ENCODE measurements at regions of chr2 and their contacts with region 1.

Region 1: GRCh38 chr2:121530212-121530705 is 421 bp upstream of the RNU4ATAC start:
- DNase-seq: peak; percentile 71 to 85 (median 80)
- H3K4me3 ChIP-seq: peak overlapping the region; percentile 54 to 99 (median 86)
- H3K27ac ChIP-seq: peak overlapping the region; percentile 91 to 100 (median 99)
- H3K27me3 ChIP-seq: no peaks in the 10 kb centered on the region
- CTCF ChIP-seq: peak in 1 of 56 donors; percentile 12

Region 2: DNA sequence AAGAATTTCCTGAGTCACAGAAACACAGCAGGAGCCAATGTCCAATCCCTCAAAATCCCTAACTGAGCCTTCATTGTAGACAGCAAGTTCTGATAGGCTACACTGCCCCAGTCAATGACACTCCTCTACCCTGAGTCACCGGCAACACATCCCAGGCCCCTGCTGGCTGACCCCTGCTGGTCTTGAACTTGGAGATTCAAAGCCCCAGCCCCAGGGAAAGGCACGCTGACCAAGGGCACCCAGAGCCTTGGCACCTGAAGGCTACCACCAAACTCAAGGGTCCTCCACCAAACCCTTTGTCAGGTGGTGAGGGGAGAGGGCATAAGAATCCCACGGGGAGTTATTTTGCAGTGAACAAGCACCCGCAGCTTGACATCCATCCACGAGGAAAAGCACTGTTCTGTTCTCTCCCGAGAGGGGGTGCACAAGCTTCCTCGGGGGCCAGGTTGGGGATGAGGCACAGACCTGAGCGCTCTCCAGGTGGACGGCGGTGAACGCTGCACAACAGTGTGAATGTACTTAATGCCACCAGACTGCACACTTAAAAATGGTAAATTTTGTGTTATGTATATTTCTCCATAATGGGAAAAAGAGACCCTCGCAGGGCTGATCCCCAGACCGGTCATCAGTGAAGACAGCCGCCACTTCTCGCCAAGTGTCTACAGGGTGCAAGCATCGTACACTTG is 292.1 kb before region 1 on chr2:
- intact Hi-C with region 1: no loop called
- DNase-seq: peak in 4 of 10 donors; percentile 8 to 26 (median 18)
- H3K4me3 ChIP-seq: no peak overlapping the region
- H3K27ac ChIP-seq: no peak overlapping the region
- H3K27me3 ChIP-seq: peaks cover 0 to 3% (median 0%) of the 10 kb centered on the region in 45 donors
- CTCF ChIP-seq: no peak

Region 3: DNA sequence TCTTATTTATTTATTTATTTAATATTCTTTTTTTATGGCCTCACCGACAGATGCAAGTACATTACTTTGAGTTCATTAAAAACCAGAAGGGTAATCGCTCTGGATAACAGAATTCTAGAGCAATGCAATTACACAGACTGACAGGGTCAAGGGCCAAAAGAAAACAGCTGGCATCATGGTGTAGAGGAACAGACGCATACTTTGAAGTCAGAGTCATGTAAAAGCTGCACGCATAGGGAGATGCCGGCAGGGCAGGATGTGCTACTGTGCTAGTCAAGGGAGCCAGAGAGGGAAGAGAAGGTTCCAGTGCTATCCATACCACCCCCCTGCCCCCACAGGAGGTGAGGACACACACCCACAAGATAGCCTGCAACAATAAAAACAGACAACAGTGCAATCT is 130.1 kb before region 1 on chr2:
- intact Hi-C with region 1: loop called in 1 of 2 experiments (anchors 5 kb)
- DNase-seq: no peak
- H3K4me3 ChIP-seq: no peak overlapping the region
- H3K27ac ChIP-seq: no peak overlapping the region
- H3K27me3 ChIP-seq: no peaks in the 10 kb centered on the region
- CTCF ChIP-seq: no peak

Region 4: DNA sequence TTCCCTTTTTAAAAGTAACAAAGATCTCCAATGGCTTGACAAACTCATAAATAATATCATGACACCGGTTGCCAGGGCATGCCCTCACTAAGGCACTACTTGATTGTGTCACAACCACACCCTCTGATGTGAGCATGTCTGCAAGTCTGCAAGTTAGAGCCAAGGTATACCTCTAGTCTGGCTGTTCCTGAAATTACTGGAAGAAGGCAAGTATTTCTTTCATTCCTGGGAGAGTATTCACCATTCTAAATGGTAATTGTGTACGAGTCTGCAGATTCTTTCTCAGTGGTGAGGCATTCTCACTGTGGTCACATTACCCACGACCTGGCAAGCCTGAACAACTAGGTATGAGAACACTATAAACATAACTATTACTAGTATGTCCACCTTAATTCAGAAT is 25.3 kb before region 1 on chr2:
- intact Hi-C with region 1: no loop called
- DNase-seq: no peak
- H3K4me3 ChIP-seq: no peak overlapping the region
- H3K27ac ChIP-seq: no peak overlapping the region
- H3K27me3 ChIP-seq: no peaks in the 10 kb centered on the region
- CTCF ChIP-seq: no peak

Region 5: GRCh38 chr2:121596221-121597080 is 66.2 kb after region 1 on chr2:
- intact Hi-C with region 1: loop called in 1 of 2 experiments (anchors 5 kb)
- DNase-seq: peak in 1 of 10 donors; percentile 14
- H3K4me3 ChIP-seq: peak overlapping the region in 25 of 59 donors; percentile 4 to 45 (median 25)
- H3K27ac ChIP-seq: peak overlapping the region in 32 of 59 donors; percentile 1 to 75 (median 34)
- H3K27me3 ChIP-seq: no peaks in the 10 kb centered on the region
- CTCF ChIP-seq: peak; percentile 27 to 71 (median 54)

Region 6: GRCh38 chr2:121717529-121717928 is 187.3 kb after region 1 on chr2:
- intact Hi-C with region 1: loop called in 1 of 2 experiments (anchors 5 kb)
- DNase-seq: peak in 1 of 10 donors; percentile 4
- H3K4me3 ChIP-seq: no peak overlapping the region
- H3K27ac ChIP-seq: no peak overlapping the region
- H3K27me3 ChIP-seq: no peaks in the 10 kb centered on the region
- CTCF ChIP-seq: no peak

Region 7: DNA sequence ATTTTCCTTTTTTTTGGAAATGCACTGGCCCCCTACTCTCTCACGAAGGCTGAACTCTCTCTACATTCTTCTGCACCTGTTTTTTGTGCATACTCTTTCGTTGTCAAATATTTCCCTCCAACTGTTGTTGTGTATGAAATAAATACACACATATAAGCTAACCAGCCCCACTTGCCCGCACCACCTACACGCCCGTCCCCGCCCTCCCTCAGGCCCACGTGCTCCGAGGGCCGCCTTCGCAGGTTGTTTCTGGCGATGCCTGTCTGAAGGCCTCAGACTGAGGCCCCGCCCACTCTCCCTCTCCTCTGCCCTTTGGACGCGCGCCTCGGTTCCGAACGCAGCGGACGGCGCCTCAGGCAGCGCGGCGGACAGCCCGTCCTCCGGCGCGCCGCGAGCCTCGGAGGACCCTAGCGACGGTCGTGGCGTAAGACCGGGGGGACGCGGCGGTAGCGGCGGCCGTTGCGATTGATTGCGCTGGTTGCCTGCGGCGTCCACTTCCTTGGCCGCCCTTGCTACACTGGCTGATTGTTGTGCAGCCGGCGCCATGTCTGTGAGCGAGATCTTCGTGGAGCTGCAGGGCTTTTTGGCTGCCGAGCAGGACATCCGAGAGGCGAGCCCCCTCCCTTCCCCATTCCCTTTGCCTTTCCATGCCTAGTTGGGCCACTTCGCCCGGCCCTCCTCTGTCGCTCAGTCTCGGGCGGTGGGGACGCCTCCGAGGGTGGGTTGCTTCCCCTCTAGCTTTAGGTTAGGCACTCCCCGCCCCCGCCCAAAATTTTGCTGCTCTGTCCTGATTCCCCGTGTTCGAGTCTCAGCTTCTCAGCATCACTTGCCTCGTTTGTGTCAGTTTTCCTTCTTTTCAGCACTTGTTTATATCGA is 225.2 kb after region 1 on chr2 and contains the start of gene TSN:
- intact Hi-C with region 1: loop called in 1 of 2 experiments (anchors 5 kb)
- DNase-seq: peak; percentile 94 to 97 (median 97)
- H3K4me3 ChIP-seq: peak within 1 kb of the TSS; percentile 70 to 100 (median 94)
- H3K27ac ChIP-seq: peak within 1 kb of the TSS in 53 of 59 donors; percentile 12 to 90 (median 73)
- H3K27me3 ChIP-seq: no peaks in the 10 kb centered on the region
- CTCF ChIP-seq: peak in 30 of 56 donors; percentile 5 to 62 (median 30)
- total RNA-seq, gene TSN: 42.4 to 82.9 (median 58.1) TPM